ENCODE measurements at regions of chr15 and their contacts with region 1.

Region 1: GRCh38 chr15:65411465-65412071 is 11.2 kb downstream of the IGDCC4 start:
- DNase-seq: no peak
- ATAC-seq: no peak
- H3K4me3 ChIP-seq: no peak overlapping the region
- H3K27ac ChIP-seq: no peak overlapping the region
- H3K4me1 ChIP-seq: peaks cover 27% of the 10 kb centered on the region
- H3K27me3 ChIP-seq: no peaks in the 10 kb centered on the region
- CTCF ChIP-seq: no peak

Region 2: DNA sequence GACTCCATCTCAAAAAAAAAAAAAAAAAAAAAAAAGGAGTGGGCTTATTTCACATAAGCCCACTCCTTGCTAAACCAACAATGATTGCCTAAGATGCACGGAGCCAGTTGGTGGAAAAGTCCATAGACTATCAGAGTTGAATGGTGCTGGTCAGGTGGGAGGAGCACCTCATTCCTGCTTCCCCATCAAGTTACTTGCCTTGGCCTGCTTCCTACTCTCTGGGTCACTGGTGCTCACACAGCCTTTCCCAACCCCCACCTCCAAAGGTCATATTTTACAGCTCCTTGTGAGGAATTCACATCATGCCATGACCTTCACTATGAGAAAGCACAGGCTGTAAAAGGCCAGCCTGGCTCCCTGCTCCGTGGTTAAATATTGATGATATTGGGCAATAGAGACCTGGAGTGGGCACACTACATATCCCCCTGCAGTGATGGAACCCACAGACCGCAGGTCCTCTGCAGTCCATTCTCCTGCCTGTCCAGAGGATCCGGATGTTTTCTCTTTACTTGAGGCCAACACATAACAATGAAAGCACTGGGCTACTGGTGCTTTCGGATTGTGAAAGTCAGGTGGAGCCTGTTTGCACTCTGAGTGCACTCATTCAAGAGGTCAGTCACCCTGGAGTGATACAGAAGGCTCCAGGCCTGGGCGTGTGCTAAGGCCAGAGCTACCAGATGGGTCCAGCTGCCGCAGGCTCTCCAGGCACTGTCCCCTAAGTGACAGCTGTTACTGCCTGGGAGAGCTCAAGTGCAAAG is 366.7 kb before region 1 on chr15 and contains the start of gene SLC51B:
- CTCF ChIA-PET with region 1: no interaction called
- POLR2A ChIA-PET with region 1: no interaction called
- in situ Hi-C with region 1: no loop called
- intact Hi-C with region 1: no loop called
- DNase-seq: no peak
- ATAC-seq: no peak
- H3K4me3 ChIP-seq: no peak within 1 kb of the TSS
- H3K27ac ChIP-seq: no peak within 1 kb of the TSS
- H3K4me1 ChIP-seq: peaks cover 4% of the 10 kb centered on the region
- H3K27me3 ChIP-seq: no peaks in the 10 kb centered on the region
- CTCF ChIP-seq: no peak
- total RNA-seq, gene SLC51B: 0.51 TPM

Region 3: DNA sequence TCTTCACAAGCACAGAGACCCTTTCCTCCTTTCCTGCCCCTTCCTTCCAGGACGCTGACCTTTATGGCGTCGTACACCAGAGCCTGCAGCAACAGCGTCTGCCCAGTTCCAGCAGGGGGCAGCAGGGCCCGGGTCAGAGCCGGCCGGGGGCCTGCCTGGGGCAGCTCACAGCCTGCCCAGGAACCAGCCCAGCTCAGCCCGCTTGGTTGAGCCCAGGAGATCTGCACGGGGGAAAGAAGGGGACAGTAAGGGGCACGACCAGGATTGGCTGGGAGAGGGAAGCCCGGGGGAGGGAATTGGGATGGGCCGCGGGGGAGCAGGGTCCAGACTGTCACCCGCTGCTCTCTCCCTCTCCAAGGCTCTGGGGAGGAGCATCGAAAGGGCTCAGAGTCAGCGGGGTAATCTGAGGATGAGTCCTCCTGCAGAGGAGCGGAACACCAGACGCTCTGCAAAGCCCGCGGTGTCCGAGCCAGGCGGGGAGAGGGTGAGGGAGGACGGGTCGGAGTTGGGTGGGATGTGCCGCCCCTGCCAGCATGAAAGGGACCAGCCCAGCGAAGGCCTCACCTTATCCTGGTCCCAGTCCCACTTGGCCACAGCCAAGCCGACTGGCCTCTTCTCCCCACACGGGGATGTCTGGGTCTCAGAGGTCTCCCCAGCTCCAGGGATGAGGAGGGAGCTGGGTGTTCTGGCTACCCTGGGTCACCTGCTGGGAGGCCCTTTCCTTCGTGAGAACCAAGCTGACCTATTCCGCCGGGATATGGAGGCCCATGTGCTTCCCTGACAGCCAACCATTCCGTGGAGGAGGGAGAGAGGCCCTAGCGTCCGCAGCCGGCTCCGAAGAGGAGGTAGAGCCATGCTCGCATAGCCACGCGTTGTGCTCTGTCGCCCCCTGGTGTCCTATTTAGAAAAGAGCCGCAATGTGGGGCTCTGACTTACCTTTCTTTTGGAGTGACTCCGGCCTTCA is 26.4 kb before region 1 on chr15:
- CTCF ChIA-PET with region 1: no interaction called
- POLR2A ChIA-PET with region 1: interaction called, 12 read pairs
- in situ Hi-C with region 1: no loop called
- intact Hi-C with region 1: no loop called
- DNase-seq: peak; percentile 60
- ATAC-seq: peak; percentile 94
- H3K4me3 ChIP-seq: peak overlapping the region; percentile 8 to 36
- H3K27ac ChIP-seq: no peak overlapping the region
- H3K4me1 ChIP-seq: peaks cover 3% of the 10 kb centered on the region
- H3K27me3 ChIP-seq: peaks cover 8% of the 10 kb centered on the region; the same call in 1 of the 2 replicates
- CTCF ChIP-seq: peak; percentile 91

Region 4: DNA sequence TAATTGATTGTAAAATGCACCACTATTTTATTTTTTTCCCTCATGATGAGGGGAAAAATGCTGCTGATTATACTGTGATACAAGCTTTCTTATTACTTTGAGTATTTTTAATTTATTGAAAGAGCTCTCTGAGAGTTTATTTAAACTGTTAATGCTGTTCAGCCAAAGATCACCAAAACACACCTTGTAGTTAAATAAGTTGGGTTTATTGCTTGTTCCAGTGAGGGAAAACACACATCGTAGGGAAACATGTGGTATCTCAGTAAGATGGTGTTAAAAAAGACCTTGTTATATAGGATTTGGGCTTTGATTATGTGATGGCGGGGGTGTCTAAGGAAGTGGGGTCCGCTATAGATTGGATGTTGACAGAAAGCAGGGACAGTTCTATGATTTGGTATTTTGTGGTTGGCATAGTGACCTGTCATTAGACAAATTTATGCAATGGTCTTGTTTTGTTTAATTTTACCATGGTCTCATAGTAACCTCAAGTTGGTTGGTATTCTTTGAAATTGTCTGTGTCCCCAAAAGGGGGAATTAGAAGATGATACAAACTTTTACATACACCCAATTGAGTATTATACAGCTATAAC is 129.8 kb after region 1 on chr15:
- CTCF ChIA-PET with region 1: no interaction called
- POLR2A ChIA-PET with region 1: no interaction called
- in situ Hi-C with region 1: no loop called
- intact Hi-C with region 1: no loop called
- DNase-seq: no peak
- ATAC-seq: no peak
- H3K4me3 ChIP-seq: no peak overlapping the region
- H3K27ac ChIP-seq: no peak overlapping the region
- H3K4me1 ChIP-seq: no peaks in the 10 kb centered on the region; the same call in 1 of the 2 replicates
- H3K27me3 ChIP-seq: no peaks in the 10 kb centered on the region
- CTCF ChIP-seq: no peak